ENCODE measurements at regions of chr5 and their contacts with region 1.

Region 1: DNA sequence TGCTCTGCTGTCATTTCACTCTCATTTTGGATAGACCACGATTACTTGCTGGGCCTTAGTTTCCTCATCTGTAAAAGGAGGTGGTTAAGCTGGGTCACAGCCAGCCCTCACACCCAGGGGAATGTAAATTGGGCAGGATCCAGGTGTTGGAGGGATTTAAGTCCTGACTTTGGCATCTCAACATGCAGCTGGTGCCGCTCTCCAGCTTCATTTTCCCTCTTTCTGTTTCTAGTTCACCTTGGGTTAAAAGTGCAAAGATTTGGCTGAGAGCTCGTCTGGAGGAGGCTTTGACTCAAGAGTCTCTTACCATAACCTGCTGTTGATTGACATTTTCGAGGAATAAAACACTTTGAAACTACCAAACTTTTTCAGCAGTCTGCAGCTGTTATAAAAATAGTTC is 144.3 kb upstream of the DHFR start:
- DNase-seq: no peak
- H3K4me3 ChIP-seq: no peak overlapping the region
- H3K27ac ChIP-seq: no peak overlapping the region
- H3K4me1 ChIP-seq: no peaks in the 10 kb centered on the region
- H3K27me3 ChIP-seq: no peaks in the 10 kb centered on the region
- CTCF ChIP-seq: no peak

Region 2: GRCh38 chr5:80871541-80871961 is 72.5 kb after region 1 on chr5:
- CTCF ChIA-PET with region 1: no interaction called
- POLR2A ChIA-PET with region 1: no interaction called
- intact Hi-C with region 1: no loop called
- DNase-seq: peak; percentile 11 to 55
- H3K4me3 ChIP-seq: no peak overlapping the region
- H3K27ac ChIP-seq: no peak overlapping the region
- H3K4me1 ChIP-seq: no peaks in the 10 kb centered on the region
- H3K27me3 ChIP-seq: no peaks in the 10 kb centered on the region
- CTCF ChIP-seq: no peak

Region 3: GRCh38 chr5:82278095-82278918 is 1479.3 kb after region 1 on chr5 and contains the start of gene RPS23:
- CTCF ChIA-PET with region 1: no interaction called
- POLR2A ChIA-PET with region 1: interaction called, 11 read pairs
- intact Hi-C with region 1: no loop called
- DNase-seq: peak; percentile 77 to 83
- H3K4me3 ChIP-seq: peak within 1 kb of the TSS; percentile 100
- H3K27ac ChIP-seq: peak within 1 kb of the TSS; percentile 90
- H3K4me1 ChIP-seq: peaks cover 17% of the 10 kb centered on the region
- H3K27me3 ChIP-seq: no peaks in the 10 kb centered on the region
- CTCF ChIP-seq: no peak
- total RNA-seq, gene RPS23: 1,620 and 2,191 TPM in 2 replicates